HepG2 (cell line): ENCODE measurements at regions of chr19 and their contacts with region 1.

Region 1: GRCh38 chr19:6769006-6769619 is 1.9 kb upstream of the SH2D3A start:
- DNase-seq: no peak
- ATAC-seq: peak; percentile 27; the same call in 2 of the 3 replicates
- H3K4me3 ChIP-seq: no peak overlapping the region
- H3K27ac ChIP-seq: no peak overlapping the region
- H3K4me1 ChIP-seq: peaks cover 40% of the 10 kb centered on the region
- H3K27me3 ChIP-seq: no peaks in the 10 kb centered on the region
- CTCF ChIP-seq: peak; percentile 61
- EP300 ChIP-seq: no peak
- POLR2A ChIP-seq: no peak
- RAD21 ChIP-seq: peak; percentile 64; the same call in 1 of the 2 replicates

Region 2: DNA sequence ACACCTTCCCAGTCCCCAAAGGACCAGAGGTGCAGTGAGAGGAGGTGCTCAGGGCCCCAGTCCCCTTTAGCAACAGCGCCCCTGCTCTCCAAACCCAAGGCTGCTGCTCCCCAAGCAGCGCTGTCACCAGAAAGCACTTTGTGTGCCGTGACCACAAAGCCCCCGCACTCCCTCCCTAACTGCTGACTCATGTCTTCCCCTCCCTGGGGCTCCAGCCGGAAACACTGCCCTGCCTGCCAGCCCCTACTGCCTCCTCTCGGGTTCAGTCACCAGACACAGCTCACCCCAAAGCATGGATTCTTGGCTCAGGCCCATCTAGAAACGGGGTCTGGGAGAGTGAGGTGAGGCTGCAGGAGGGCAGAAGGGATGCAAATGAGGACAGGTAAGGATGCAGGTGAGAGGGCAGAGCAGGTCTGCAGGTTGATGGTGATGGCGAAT is 94.2 kb before region 1 on chr19:
- CTCF ChIA-PET with region 1: no interaction called
- POLR2A ChIA-PET with region 1: no interaction called
- in situ Hi-C with region 1: no loop called
- intact Hi-C with region 1: no loop called
- DNase-seq: no peak
- ATAC-seq: no peak
- H3K4me3 ChIP-seq: no peak overlapping the region
- H3K27ac ChIP-seq: no peak overlapping the region
- H3K4me1 ChIP-seq: no peaks in the 10 kb centered on the region
- H3K27me3 ChIP-seq: no peaks in the 10 kb centered on the region; a peak in 1 of 5 replicates
- CTCF ChIP-seq: no peak
- EP300 ChIP-seq: no peak
- POLR2A ChIP-seq: peak in 1 of 2 experiments; percentile 9; a peak in 2 of 4 replicates
- RAD21 ChIP-seq: no peak

Region 3: DNA sequence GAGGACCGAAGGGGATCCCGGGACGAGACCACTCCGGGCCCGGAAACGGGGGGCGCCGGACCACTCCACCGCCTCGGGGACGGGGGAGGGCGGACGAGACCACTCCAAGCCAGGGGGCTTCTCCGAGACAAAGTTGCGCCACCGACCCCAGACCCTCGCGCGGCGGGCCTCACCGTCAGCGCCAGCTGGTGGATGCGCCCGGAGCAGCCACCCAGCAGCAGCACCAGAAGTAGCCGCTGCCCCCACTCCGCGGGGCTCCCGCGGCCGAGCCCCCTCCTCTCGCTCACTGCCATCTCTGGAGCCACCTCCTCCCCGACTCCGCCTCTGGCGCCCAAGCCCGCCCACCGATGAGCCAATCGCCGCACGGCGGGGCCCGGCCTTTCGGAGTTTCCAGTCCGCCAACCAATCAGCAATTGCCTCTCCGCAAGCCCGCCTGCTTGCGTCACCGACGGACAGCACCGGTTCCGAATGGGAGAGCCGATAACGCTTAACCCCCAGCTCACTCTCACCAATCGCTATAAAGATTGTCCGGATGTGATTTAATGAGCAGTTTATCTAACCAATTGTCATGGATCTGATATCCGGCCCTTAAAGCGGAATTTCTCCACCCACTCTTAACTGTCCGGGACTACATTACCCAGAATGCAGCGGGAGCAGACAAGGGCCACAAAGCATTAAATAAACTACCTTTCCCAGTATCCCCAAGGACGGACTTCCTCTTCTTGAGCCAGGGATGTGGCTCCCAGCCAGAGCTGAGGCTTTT is 31.6 kb before region 1 on chr19 and contains the start of gene GPR108:
- CTCF ChIA-PET with region 1: interaction called, 17 read pairs
- POLR2A ChIA-PET with region 1: interaction called, 3 read pairs
- in situ Hi-C with region 1: no loop called
- intact Hi-C with region 1: loop called (anchors 1 kb)
- DNase-seq: peak; percentile 100
- ATAC-seq: peak; percentile 72
- H3K4me3 ChIP-seq: peak within 1 kb of the TSS; percentile 82 to 100 (median 90)
- H3K27ac ChIP-seq: peak within 1 kb of the TSS; percentile 89
- H3K4me1 ChIP-seq: peaks cover 56% of the 10 kb centered on the region
- H3K27me3 ChIP-seq: no peaks in the 10 kb centered on the region; a peak in 1 of 5 replicates
- CTCF ChIP-seq: 0 out of 2 replicates have a peak, but pooled peaks have one; percentile 13
- EP300 ChIP-seq: no peak
- POLR2A ChIP-seq: peak; percentile 56 to 67; a peak in 3 of 4 replicates
- RAD21 ChIP-seq: peak; percentile 49; the same call in 1 of the 2 replicates
- total RNA-seq, gene GPR108: 24.1 and 36.4 TPM in 2 replicates